ENCODE measurements at regions of chr10 and their contacts with region 1.

Region 1: GRCh38 chr10:62610649-62611229 is 193.8 kb upstream of the ADO start:
- DNase-seq: peak; percentile 89
- CTCF ChIP-seq: peak; percentile 95

Region 2: DNA sequence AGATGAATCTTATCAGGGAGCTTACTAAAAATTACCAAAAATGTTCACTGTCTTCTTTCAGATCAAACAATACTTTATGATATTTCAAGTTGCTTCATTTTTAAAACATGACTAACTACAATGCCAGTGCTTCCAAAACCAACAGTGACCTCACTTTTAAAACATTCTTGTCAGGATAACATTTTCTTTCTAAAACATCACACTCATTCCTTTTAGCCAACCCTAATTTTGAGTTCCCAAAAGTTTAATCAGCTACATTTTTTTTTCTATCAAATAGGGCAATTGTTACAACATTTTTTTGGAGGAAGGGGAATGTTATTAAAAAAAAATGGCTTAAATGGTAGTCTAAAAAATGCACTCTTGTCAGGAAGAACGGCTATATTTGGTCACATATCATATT is 379.4 kb before region 1 on chr10:
- in situ Hi-C with region 1: no loop called
- DNase-seq: no peak
- CTCF ChIP-seq: no peak

Region 3: DNA sequence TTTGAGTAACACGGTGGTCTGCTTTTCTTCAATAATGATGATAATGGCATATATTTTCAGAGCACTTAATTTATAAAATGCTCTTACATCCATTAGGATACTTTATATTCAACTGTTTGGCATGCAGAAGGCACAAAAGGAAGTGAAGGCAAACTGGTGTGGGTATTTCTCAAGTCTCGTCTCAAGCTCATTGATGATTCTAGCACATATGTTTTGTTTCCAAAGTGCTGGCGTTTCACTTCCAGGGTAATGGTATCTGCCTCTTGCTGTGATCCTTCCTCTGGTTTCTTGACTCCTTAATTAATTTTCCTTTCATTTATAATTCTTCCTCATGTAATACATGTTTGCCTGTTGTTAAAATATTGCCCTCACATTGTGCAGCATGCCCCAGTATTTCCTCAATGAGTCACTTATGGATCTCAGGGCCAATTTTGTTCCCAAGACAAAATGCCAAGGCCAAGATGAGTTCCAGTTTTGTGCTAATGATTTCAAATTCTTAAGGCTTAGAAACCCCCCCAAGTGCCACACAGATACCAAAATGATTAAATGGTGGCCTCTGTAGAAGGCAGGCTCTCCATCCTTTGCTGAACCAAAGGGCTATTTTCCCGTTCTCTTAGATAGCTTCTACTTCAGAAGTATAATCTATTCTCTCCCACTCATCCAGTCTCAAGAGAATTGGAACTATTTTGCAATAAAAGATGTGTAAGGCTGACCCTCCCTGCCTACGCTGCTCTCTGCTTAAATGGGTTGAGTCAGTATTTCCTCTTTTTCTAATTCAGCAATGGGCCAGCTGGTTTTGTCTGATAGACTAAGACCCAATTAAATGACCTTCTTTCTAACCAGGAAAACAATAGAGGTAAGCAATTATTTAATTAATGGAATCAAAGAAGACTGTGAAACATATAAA is 65.3 kb before region 1 on chr10:
- in situ Hi-C with region 1: no loop called
- DNase-seq: no peak
- CTCF ChIP-seq: no peak

Region 4: GRCh38 chr10:62681211-62681940 is 70.6 kb after region 1 on chr10:
- in situ Hi-C with region 1: loop called (anchors 10 kb)
- DNase-seq: peak; percentile 82
- CTCF ChIP-seq: peak; percentile 73

Region 5: GRCh38 chr10:63071140-63071539 is 460.4 kb after region 1 on chr10:
- in situ Hi-C with region 1: loop called (anchors 10 kb)
- DNase-seq: no peak
- CTCF ChIP-seq: no peak

Measured in GM13977 (cell line).